ENCODE measurements at regions of chr7 and their contacts with region 1.

Region 1: DNA sequence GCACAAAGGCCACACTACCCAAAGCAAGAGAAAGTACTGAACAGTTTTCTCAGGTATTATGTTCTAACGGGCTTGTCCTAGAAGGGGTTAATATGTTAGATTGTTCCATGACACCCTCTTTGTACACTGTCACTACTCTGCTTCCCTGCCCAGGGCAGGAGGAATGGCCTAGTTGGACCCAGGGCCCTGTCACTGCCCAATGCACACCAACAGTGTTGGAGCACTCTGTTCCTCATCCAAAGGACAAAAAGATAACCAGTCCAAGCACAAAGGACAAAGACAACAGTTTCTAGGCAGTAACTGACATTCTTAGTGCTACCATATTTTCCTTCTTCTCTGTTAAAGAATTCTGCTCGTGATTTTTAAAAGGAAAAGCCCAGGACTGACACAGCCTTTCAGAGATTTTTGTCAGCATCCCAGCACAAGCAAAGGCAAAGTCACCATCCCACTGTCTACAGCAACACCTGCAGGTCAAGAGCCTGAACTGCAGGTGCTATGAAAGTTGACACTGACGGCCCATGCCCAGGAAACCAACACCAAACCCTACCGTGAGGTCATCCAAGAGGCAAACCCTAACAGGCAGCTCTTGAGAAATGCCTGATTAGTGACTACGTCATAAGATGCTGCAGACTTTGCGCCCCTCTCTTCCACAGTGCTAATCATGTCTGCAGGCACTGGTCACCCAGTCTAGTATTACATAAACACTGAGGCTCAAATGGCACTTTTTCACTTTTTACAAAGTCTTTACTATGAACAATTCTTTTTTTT is 13.2 kb downstream of the NUDCD3 start:
- DNase-seq: peak; percentile 59
- H3K4me3 ChIP-seq: no peak overlapping the region
- H3K27ac ChIP-seq: no peak overlapping the region
- H3K27me3 ChIP-seq: no peaks in the 10 kb centered on the region
- CTCF ChIP-seq: peak; percentile 99

Region 2: GRCh38 chr7:44463169-44463808 is 14.0 kb before region 1 on chr7:
- CTCF ChIA-PET with region 1: interaction called, 16 read pairs
- POLR2A ChIA-PET with region 1: no interaction called
- DNase-seq: no peak
- H3K4me3 ChIP-seq: no peak overlapping the region
- H3K27ac ChIP-seq: no peak overlapping the region
- H3K27me3 ChIP-seq: no peaks in the 10 kb centered on the region
- CTCF ChIP-seq: peak; percentile 35